A549 (cell line): ENCODE measurements at regions of chr5 and their contacts with region 1.

Region 1: DNA sequence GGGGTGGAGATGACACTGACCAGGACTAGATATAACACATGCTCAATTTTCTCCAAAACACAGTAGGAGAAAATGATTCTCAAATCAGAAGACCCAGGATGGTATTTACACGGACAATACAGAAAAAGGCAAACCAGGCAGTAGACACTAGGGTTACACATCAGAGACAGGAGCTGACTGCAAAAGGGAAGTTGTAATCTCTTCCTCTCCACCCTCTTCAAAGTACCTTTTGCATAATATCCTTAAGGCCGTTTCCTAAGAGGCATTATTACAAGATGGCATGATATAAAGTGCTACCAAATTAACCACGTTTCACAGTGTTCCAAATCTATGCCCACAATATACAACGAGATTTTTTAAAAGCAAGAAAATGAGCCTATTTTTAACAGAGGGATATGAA is 39.2 kb downstream of the YIPF5 start:
- DNase-seq: no peak
- ATAC-seq: no peak
- H3K4me3 ChIP-seq: no peak overlapping the region
- H3K27ac ChIP-seq: no peak overlapping the region
- H3K4me1 ChIP-seq: no peaks in the 10 kb centered on the region
- CTCF ChIP-seq: no peak
- EP300 ChIP-seq: no peak
- POLR2A ChIP-seq: no peak
- RAD21 ChIP-seq: no peak

Region 2: GRCh38 chr5:144117412-144117811 is 13.8 kb before region 1 on chr5:
- CTCF ChIA-PET with region 1: no interaction called
- POLR2A ChIA-PET with region 1: no interaction called
- DNase-seq: no peak
- ATAC-seq: no peak
- H3K4me3 ChIP-seq: no peak overlapping the region
- H3K27ac ChIP-seq: no peak overlapping the region
- H3K4me1 ChIP-seq: no peaks in the 10 kb centered on the region
- CTCF ChIP-seq: no peak
- EP300 ChIP-seq: no peak
- POLR2A ChIP-seq: no peak
- RAD21 ChIP-seq: no peak

Region 3: GRCh38 chr5:144142139-144142823 is 11.0 kb after region 1 on chr5:
- CTCF ChIA-PET with region 1: interaction called, 37 read pairs
- POLR2A ChIA-PET with region 1: no interaction called
- DNase-seq: peak; percentile 44 to 60
- ATAC-seq: peak; percentile 97 to 99
- H3K4me3 ChIP-seq: no peak overlapping the region
- H3K27ac ChIP-seq: peak overlapping the region; percentile 6 to 70; a peak in 5 of 6 replicates
- H3K4me1 ChIP-seq: peaks cover 11% of the 10 kb centered on the region; the same call in 2 of the 3 replicates
- CTCF ChIP-seq: peak; percentile 85
- EP300 ChIP-seq: no peak
- POLR2A ChIP-seq: no peak
- RAD21 ChIP-seq: peak; percentile 88 to 91

Region 4: GRCh38 chr5:144566747-144567420 is 435.6 kb after region 1 on chr5:
- CTCF ChIA-PET with region 1: no interaction called
- POLR2A ChIA-PET with region 1: no interaction called
- DNase-seq: no peak
- ATAC-seq: no peak; a peak in 1 of 6 replicates
- H3K4me3 ChIP-seq: no peak overlapping the region
- H3K27ac ChIP-seq: no peak overlapping the region
- H3K4me1 ChIP-seq: no peaks in the 10 kb centered on the region
- CTCF ChIP-seq: no peak
- EP300 ChIP-seq: no peak
- POLR2A ChIP-seq: no peak
- RAD21 ChIP-seq: no peak